Activated CD4-positive, alpha-beta T cell treated with anti-CD3 and anti-CD28 coated beads, Interleukin-2, amount 10 ng/mL, durations not matched to agents 24 days and 14 days (primary cell): ENCODE measurements at regions of chr11 and their contacts with region 1.

Region 1: GRCh38 chr11:18540207-18541009 is 13.7 kb upstream of the TSG101 start:
- DNase-seq: peak; percentile 67
- H3K4me3 Mint-ChIP-seq: no peak overlapping the region
- H3K27ac Mint-ChIP-seq: no peak overlapping the region
- H3K4me1 Mint-ChIP-seq: peaks cover 7% of the 10 kb centered on the region
- H3K27me3 Mint-ChIP-seq: no peaks in the 10 kb centered on the region

Region 2: GRCh38 chr11:18329196-18329870 is 211.1 kb before region 1 on chr11:
- intact Hi-C with region 1: no loop called
- DNase-seq: peak; percentile 48
- H3K4me3 Mint-ChIP-seq: peak overlapping the region; percentile 40
- H3K27ac Mint-ChIP-seq: peak overlapping the region; percentile 78
- H3K4me1 Mint-ChIP-seq: peaks cover 50% of the 10 kb centered on the region
- H3K27me3 Mint-ChIP-seq: no peaks in the 10 kb centered on the region

Region 3: DNA sequence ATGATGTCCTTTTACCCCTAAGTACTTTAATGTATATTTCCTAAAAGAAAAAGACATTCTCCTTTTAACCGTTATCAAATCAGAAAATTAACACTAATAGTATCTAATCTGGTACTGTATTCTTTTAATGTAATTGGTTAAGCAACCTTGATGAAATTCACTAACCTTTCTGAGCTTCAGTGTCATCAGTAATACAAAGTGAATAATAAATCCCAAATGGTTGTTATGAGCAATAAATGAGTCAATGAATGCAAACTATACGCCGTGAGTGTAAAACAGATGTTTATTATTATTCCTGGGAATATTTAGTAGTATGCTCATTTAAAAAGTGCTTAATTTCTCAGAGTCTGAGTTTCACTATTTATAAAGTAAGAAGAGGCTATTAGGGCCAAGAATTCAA is 26.7 kb after region 1 on chr11:
- intact Hi-C with region 1: no loop called
- DNase-seq: no peak
- H3K4me3 Mint-ChIP-seq: no peak overlapping the region
- H3K27ac Mint-ChIP-seq: no peak overlapping the region
- H3K4me1 Mint-ChIP-seq: peaks cover 3% of the 10 kb centered on the region
- H3K27me3 Mint-ChIP-seq: no peaks in the 10 kb centered on the region

Region 4: DNA sequence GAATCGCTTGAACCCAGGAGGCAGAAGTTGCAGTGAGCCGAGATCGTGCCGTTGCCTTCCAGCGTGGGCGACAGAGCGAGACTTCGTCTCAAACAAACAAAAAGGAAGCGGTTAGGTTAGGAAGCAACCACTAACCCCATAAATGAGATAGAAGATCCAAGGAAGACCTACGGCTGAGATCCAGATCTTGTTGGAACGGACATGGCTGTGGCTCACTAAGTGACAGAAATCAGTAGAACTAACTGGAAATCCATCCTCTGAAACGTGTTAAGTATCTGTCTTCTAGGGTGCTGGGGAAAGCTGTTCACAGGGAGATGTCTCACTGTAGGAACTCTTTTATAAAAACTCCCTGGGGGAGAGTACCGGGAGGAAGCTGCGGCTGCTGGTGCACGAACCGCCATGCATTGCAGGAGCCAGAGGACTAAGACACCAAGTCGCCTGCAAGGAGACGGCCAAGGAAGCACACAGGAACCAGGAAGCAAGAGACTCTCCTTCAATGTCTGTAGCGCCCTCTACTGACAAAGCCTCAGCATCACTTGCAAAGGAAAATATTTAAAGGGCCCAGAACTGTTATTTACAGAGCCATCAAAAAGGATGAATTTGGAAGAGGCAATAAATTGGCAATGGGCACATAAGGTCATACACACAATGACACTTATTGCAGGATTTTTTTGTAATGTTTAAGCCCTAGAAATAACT is 110.6 kb after region 1 on chr11:
- intact Hi-C with region 1: loop called (anchors 1 kb)
- DNase-seq: peak; percentile 86
- H3K4me3 Mint-ChIP-seq: no peak overlapping the region
- H3K27ac Mint-ChIP-seq: no peak overlapping the region
- H3K4me1 Mint-ChIP-seq: peaks cover 8% of the 10 kb centered on the region
- H3K27me3 Mint-ChIP-seq: no peaks in the 10 kb centered on the region

Region 5: GRCh38 chr11:18731949-18732821 is 191.8 kb after region 1 on chr11:
- intact Hi-C with region 1: loop called (anchors 1 kb)
- DNase-seq: peak; percentile 90
- H3K4me3 Mint-ChIP-seq: no peak overlapping the region
- H3K27ac Mint-ChIP-seq: no peak overlapping the region
- H3K4me1 Mint-ChIP-seq: peaks cover 3% of the 10 kb centered on the region
- H3K27me3 Mint-ChIP-seq: peaks cover 4% of the 10 kb centered on the region

Region 6: GRCh38 chr11:18757811-18758210 is 217.4 kb after region 1 on chr11:
- intact Hi-C with region 1: no loop called
- DNase-seq: no peak
- H3K4me3 Mint-ChIP-seq: no peak overlapping the region
- H3K27ac Mint-ChIP-seq: no peak overlapping the region
- H3K4me1 Mint-ChIP-seq: no peaks in the 10 kb centered on the region
- H3K27me3 Mint-ChIP-seq: peaks cover 2% of the 10 kb centered on the region